PC-9 (cell line): ENCODE measurements at regions of chr5 and their contacts with region 1.

Region 1: GRCh38 chr5:154072414-154073171 is 33.8 kb downstream of the MFAP3 start:
- DNase-seq: peak; percentile 44 to 81
- H3K4me3 ChIP-seq: no peak overlapping the region
- H3K27ac ChIP-seq: no peak overlapping the region
- H3K4me1 ChIP-seq: peaks cover 25% of the 10 kb centered on the region
- H3K27me3 ChIP-seq: no peaks in the 10 kb centered on the region
- CTCF ChIP-seq: peak; percentile 99

Region 2: GRCh38 chr5:154039458-154039829 is 33.1 kb before region 1 on chr5:
- CTCF ChIA-PET with region 1: no interaction called
- POLR2A ChIA-PET with region 1: no interaction called
- intact Hi-C with region 1: no loop called
- DNase-seq: no peak
- H3K4me3 ChIP-seq: peak overlapping the region; percentile 85
- H3K27ac ChIP-seq: no peak overlapping the region; the same call in 1 of the 2 replicates
- H3K4me1 ChIP-seq: peaks cover 20% of the 10 kb centered on the region
- H3K27me3 ChIP-seq: no peaks in the 10 kb centered on the region
- CTCF ChIP-seq: no peak

Region 3: DNA sequence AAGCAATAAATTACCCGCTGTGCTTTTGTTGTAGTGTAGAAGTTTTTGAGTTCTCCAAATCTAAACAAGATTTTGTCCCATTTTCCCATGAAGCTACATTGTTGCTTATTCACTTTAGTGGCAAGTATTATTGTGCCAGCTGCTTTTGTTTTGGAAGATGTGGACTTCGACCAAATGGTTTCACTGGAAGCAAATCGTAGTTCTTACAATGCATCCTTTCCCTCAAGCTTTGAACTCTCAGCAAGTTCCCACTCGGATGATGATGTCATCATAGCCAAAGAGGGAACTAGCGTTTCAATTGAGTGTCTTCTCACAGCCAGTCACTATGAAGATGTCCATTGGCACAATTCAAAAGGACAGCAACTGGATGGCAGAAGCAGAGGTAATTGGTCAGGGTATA is 23.0 kb before region 1 on chr5:
- CTCF ChIA-PET with region 1: interaction called, 11 read pairs
- POLR2A ChIA-PET with region 1: no interaction called
- intact Hi-C with region 1: no loop called
- DNase-seq: no peak
- H3K4me3 ChIP-seq: no peak overlapping the region
- H3K27ac ChIP-seq: no peak overlapping the region
- H3K4me1 ChIP-seq: no peaks in the 10 kb centered on the region
- H3K27me3 ChIP-seq: no peaks in the 10 kb centered on the region
- CTCF ChIP-seq: no peak

Region 4: DNA sequence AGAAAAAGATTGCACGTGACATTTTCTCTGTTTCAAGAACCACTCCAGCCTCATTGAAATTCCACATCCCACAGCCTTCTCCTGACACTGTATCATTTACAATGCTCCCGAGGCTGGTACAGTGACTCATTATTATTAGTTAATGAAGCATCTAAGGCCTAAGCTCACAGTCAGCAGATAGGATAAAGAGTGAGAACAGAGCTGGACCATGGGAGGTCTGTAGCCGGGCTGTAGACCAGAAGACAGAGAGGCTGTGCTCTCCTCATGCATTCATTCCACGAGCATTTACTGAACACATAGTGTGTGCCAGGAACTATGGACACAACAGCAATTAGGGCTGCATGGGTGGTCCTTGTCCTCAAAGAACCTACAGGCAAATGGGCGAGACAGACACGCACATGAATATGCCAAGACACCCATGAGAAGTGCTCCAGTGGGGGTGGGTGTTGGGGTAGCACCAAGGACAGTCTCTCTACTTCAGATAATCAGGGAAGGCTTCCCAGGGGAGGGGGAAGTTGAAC is 70.7 kb after region 1 on chr5:
- CTCF ChIA-PET with region 1: no interaction called
- POLR2A ChIA-PET with region 1: no interaction called
- intact Hi-C with region 1: no loop called
- DNase-seq: no peak
- H3K4me3 ChIP-seq: no peak overlapping the region
- H3K27ac ChIP-seq: no peak overlapping the region
- H3K4me1 ChIP-seq: no peaks in the 10 kb centered on the region
- H3K27me3 ChIP-seq: no peaks in the 10 kb centered on the region
- CTCF ChIP-seq: no peak

Region 5: DNA sequence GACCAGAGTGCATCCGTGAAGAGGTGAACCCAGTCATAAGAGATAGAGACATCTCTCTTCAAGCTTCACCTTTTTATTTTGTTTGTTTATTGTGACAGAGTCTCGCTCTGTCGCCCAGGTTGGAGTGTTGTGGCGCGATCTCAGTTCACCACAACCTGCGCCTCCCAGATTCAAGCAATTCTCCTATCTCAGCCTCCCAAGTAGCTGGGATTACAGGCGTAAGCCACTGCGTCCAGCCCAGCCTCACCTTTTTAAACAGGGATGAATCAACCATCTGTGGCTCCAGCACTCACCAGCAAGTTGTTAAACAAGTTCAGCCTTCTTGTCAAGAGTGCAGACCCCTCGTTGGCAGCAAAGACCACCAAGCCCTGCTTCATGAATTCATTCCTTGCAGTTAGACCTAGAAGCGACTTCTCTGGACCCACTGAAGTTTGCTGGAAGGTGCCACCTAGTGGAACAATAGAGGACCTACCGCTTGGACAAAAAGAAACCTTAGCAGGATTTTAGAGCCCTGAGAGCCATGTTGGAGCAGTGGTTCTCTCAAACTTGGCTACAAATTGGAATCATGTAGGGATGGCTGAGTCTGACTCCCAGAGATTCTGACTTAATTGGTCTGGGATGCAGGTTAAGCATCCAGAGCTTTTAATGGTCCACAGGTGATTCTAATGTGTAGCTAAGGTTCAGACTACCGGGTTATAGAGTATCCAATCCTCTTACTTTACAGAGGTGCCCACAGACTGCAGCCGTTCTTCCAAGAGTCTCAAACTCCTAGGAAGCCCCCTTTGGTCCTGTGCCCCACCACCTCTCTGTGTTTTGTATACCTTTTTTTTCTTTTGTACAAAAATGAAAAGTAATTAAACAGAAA is 107.5 kb after region 1 on chr5:
- CTCF ChIA-PET with region 1: interaction called, 7 read pairs
- POLR2A ChIA-PET with region 1: interaction called, 23 read pairs
- intact Hi-C with region 1: loop called (anchors 1 kb)
- DNase-seq: peak in 1 of 2 experiments; percentile 51
- H3K4me3 ChIP-seq: no peak overlapping the region
- H3K27ac ChIP-seq: no peak overlapping the region
- H3K4me1 ChIP-seq: peaks cover 22% of the 10 kb centered on the region
- H3K27me3 ChIP-seq: no peaks in the 10 kb centered on the region
- CTCF ChIP-seq: peak; percentile 89

Region 6: GRCh38 chr5:154334406-154335064 is 261.9 kb after region 1 on chr5:
- CTCF ChIA-PET with region 1: no interaction called
- POLR2A ChIA-PET with region 1: no interaction called
- intact Hi-C with region 1: loop called (anchors 2 kb)
- DNase-seq: no peak
- H3K4me3 ChIP-seq: no peak overlapping the region
- H3K27ac ChIP-seq: no peak overlapping the region
- H3K4me1 ChIP-seq: no peaks in the 10 kb centered on the region
- H3K27me3 ChIP-seq: no peaks in the 10 kb centered on the region
- CTCF ChIP-seq: no peak

Region 7: DNA sequence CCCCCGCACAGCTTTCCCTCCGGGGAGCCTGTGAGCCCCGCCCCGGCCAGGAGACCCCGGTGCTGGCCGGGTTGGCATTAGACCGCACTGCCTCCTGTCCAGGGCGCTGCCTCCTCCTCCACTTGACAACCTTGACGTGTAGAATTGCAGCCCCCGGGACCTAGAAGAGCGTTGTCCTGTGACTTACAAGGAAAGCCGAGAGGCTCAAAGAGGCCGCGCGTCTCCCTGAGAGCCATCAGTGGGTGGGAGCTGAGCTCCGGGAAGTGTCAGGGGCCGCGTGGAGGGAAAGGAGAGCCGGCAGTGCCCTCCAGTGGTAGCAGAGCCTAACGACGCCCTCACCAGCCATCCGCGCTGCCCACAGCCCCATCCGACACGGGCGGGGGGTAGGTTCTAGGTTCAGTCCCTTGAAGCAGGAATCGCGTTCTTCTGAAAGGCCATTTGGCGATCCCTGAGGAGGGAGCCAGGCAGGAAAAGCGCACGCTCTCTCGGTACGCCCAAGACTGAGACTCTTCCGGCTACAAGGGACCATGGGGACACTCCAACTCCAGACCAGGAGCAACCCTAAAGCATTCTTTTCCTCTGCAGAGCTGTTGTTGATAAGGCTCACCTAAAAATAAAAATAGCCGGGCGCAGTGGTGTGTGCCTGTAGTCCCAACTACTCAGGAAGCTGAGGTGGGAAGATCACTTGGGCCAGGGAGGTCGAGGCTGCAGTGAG is 332.6 kb after region 1 on chr5:
- CTCF ChIA-PET with region 1: no interaction called
- POLR2A ChIA-PET with region 1: no interaction called
- intact Hi-C with region 1: loop called (anchors 1 kb)
- DNase-seq: peak in 1 of 2 experiments; percentile 23
- H3K4me3 ChIP-seq: no peak overlapping the region
- H3K27ac ChIP-seq: no peak overlapping the region
- H3K4me1 ChIP-seq: no peaks in the 10 kb centered on the region
- H3K27me3 ChIP-seq: no peaks in the 10 kb centered on the region
- CTCF ChIP-seq: peak; percentile 61

Region 8: DNA sequence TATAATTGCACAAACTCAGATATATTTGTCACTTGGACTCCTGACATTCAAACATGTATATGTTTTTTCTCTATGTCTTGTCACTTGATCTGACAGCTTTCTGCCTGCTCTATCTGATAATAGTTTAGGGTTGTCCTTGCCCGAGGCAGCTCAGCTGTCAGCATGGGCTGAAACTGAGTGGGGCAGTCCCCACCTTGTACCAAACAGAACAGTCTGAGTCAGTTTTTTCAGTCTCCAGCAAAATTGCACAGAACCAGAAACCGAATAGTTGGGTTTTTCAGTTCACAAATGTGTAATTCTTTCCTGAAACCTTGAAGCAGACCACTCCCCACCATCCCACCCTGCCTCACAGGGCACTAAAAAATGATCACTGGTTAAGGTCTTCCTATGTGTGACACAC is 414.9 kb after region 1 on chr5:
- CTCF ChIA-PET with region 1: no interaction called
- POLR2A ChIA-PET with region 1: no interaction called
- intact Hi-C with region 1: no loop called
- DNase-seq: no peak
- H3K4me3 ChIP-seq: no peak overlapping the region
- H3K27ac ChIP-seq: no peak overlapping the region
- H3K4me1 ChIP-seq: no peaks in the 10 kb centered on the region
- H3K27me3 ChIP-seq: peaks cover 47% of the 10 kb centered on the region
- CTCF ChIP-seq: no peak

Region 9: GRCh38 chr5:154610321-154611154 is 537.9 kb after region 1 on chr5:
- CTCF ChIA-PET with region 1: no interaction called
- POLR2A ChIA-PET with region 1: no interaction called
- intact Hi-C with region 1: loop called (anchors 1 kb)
- DNase-seq: peak; percentile 66 to 85
- H3K4me3 ChIP-seq: peak overlapping the region; percentile 45; the same call in 1 of the 2 replicates
- H3K27ac ChIP-seq: no peak overlapping the region
- H3K4me1 ChIP-seq: peaks cover 14% of the 10 kb centered on the region; the same call in 1 of the 2 replicates
- H3K27me3 ChIP-seq: no peaks in the 10 kb centered on the region
- CTCF ChIP-seq: peak; percentile 93